H1 (cell line): ENCODE measurements at regions of chr13 and their contacts with region 1.

Region 1: GRCh38 chr13:72221276-72221962 is 354.4 kb upstream of the DACH1 start:
- DNase-seq: peak; percentile 75 to 82
- H3K4me3 ChIP-seq: no peak overlapping the region
- H3K27ac ChIP-seq: no peak overlapping the region
- H3K4me1 ChIP-seq: no peaks in the 10 kb centered on the region
- H3K27me3 ChIP-seq: no peaks in the 10 kb centered on the region
- CTCF ChIP-seq: peak; percentile 71 to 100 (median 99)
- EP300 ChIP-seq: no peak
- POLR2A ChIP-seq: no peak
- RAD21 ChIP-seq: peak; percentile 74 to 79

Region 2: GRCh38 chr13:72062566-72062965 is 158.9 kb before region 1 on chr13:
- CTCF ChIA-PET with region 1: no interaction called
- POLR2A ChIA-PET with region 1: no interaction called
- DNase-seq: peak; percentile 56 to 75
- H3K4me3 ChIP-seq: no peak overlapping the region
- H3K27ac ChIP-seq: no peak overlapping the region
- H3K4me1 ChIP-seq: peaks cover 0 to 6% (median 3%) of the 10 kb centered on the region in 4 experiments; a peak in 3 of 7 replicates
- H3K27me3 ChIP-seq: peaks cover 0 to 2% (median 0%) of the 10 kb centered on the region in 4 experiments; a peak in 1 of 7 replicates
- CTCF ChIP-seq: no peak
- EP300 ChIP-seq: peak in 1 of 2 experiments; percentile 86; a peak in 1 of 3 replicates
- POLR2A ChIP-seq: no peak
- RAD21 ChIP-seq: 0 out of 4 replicates have a peak, but pooled peaks of 1 of the 2 experiments have one; percentile 0

Region 3: GRCh38 chr13:72244788-72245187 is 23.4 kb after region 1 on chr13:
- CTCF ChIA-PET with region 1: interaction called, 10 read pairs
- POLR2A ChIA-PET with region 1: no interaction called
- DNase-seq: no peak
- H3K4me3 ChIP-seq: no peak overlapping the region
- H3K27ac ChIP-seq: no peak overlapping the region
- H3K4me1 ChIP-seq: no peaks in the 10 kb centered on the region
- H3K27me3 ChIP-seq: no peaks in the 10 kb centered on the region
- CTCF ChIP-seq: no peak
- EP300 ChIP-seq: no peak
- POLR2A ChIP-seq: no peak
- RAD21 ChIP-seq: no peak